Right ventricle myocardium inferior (tissue), 1 donor: ENCODE measurements at regions of chr3 and their contacts with region 1.

Region 1: DNA sequence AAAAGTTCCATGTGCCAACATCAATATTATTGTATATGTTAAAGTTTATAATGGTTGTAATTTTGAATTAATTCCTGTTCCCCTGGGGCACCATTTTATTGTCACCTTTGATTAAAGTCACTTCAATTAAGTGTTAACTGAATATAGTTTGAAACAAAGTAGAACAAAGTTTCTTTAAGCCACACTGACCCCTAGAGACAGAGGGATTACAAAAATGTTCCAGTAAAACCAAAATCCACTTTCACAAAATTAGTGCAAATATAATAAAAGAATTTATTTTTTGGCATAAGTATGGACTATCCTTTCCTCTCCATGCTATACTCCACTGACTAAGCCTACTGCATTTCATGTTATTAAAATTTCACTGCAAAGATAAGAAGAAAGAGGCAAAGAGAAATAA is 123.9 kb downstream of the ZMAT3 start:
- DNase-seq: no peak
- ATAC-seq: no peak

Region 2: DNA sequence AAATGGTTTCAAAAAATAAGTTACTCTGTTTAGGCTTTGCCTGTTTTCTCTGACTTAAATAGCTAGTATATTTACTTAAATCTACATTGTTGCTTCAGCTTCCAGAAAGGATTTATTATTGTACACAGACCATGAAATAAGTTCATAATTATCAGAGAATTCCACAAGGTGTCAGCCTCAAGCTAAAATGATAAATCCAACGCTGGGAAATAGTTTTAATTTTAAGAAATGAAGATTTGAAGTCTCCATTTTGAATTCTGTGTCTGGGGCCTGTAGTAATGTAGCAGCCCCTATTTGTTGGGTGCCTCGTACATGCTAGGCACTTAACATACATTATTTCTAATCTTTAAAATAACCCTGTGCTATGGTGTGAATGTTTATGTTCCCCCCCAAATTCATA is 504.1 kb before region 1 on chr3:
- intact Hi-C with region 1: loop called (anchors 5 kb)
- DNase-seq: no peak
- ATAC-seq: no peak

Region 3: DNA sequence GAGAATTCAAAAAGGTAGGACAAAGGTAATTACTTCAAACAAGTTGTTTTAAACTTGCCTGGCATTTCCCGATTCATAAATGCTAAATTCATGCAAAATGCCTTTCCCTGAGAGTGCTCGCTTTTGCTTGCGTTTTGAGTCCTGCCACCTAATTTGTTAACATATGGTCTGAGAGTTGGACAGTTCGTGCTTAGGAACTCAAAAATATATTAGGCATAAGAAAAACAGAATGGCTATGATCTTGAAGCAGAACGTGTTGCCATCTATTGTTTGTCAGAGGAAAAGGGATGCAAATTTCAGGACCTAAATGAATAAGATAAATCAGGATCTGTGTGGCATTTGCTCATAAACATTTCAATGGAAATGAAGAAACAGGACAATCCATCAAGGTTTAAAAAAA is 71.9 kb before region 1 on chr3:
- intact Hi-C with region 1: loop called (anchors 10 kb)
- DNase-seq: no peak
- ATAC-seq: no peak

Region 4: DNA sequence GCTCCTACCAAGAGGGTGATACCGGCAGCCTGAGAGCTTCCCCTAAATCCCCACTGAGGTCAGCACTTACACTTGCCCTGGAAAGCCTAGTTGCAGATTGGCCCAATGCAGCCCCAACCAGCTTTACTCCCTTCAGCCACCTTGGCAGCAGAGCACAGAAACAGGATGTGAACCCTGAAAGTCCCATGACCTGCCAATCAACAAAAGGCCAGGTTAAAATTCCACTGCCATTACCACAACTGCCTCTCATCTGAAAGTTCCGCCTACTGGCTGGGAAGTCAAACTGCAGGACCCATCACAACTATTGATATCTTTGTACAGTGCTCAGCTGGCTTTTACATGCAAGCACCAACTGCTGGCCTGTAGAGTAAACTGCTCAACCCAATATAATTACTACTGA is 32.4 kb before region 1 on chr3:
- intact Hi-C with region 1: no loop called
- DNase-seq: no peak
- ATAC-seq: no peak

Region 5: GRCh38 chr3:179181021-179181472 is 233.3 kb after region 1 on chr3:
- intact Hi-C with region 1: no loop called
- DNase-seq: no peak
- ATAC-seq: peak; percentile 86